ENCODE measurements at regions of chr16 and their contacts with region 1.

Region 1: DNA sequence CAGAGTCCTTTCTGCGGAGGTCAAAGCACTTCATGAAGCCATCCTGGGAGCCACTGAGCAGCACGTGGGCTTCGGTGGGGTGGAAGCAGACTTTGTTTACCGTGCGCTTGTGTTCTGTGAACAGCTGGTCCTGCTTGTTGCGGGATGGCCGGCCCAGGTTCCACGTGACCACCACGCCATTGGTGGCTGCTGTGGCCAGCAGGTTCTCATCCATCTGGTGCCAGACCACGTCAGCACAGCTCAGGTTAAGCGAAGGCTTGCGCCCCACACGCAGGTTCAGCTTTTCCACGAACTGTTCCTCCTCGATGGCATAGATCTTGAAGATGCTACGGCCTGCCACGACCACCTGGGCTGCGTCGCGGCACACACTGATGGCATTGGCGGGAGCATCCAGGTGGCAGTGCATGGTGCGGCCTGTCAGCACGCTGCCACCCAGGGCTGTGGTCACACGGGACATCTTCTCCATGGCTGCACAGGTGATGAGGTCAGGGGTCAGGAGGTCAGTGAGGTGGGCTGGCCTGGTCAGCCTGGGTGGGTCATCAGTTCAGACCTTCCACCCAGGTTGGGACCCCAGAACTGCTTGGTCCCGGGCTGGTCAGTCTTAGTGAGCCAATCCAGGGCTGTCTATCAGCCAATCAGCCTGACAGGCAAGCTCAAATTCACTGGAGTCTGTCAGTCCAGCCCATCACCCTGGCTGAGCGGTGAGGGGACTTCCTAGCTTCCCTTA is 860 bp downstream of the WDR24 start:
- DNase-seq: no peak
- ATAC-seq: no peak
- H3K4me3 Mint-ChIP-seq: peak overlapping the region; percentile 90
- H3K27ac Mint-ChIP-seq: peak overlapping the region; percentile 82
- H3K4me1 Mint-ChIP-seq: peaks cover 33% of the 10 kb centered on the region
- H3K27me3 Mint-ChIP-seq: peaks cover 9% of the 10 kb centered on the region
- CTCF ChIP-seq: no peak

Region 2: DNA sequence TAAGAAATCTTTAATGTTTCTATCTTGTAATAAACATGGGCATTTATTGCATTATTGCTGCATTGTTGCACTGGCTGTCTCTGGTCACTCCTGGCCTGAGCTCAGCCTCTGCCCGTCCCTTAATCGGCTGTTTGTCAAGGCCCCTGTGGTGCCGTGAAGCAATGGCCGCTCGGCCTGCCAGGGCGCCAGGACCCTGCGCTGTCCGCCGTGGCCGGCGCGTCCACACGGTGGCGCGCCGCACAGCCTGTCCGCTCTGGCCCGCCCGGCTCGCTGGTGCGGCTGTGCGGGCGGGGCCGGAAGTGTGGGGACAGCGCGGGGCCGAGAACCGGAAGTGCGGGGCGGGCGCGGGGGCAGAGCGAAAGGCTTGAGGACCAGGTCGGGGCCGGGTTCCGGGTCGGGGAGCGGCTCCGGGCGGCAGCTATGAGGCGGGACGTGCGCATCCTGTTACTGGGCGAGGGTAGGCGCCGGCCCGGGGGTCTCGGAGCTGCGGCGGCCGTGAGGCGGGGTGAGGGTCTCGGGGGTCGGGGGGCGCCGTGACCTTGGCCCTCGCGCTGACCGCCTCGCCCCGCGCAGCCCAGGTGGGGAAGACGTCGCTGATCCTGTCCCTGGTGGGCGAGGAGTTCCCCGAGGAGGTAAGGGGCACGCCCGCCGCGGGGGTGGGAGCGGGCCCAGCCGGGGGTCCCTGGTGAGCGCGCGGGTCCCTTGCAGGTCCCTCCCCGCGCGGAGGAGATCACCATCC is 21.4 kb before region 1 on chr16 and contains the start of gene RHOT2:
- CTCF ChIA-PET with region 1: no interaction called
- POLR2A ChIA-PET with region 1: interaction called, 14 read pairs
- intact Hi-C with region 1: no loop called
- DNase-seq: peak; percentile 96
- ATAC-seq: peak; percentile 98
- H3K4me3 Mint-ChIP-seq: peak within 1 kb of the TSS; percentile 80
- H3K27ac Mint-ChIP-seq: peak within 1 kb of the TSS; percentile 80
- H3K4me1 Mint-ChIP-seq: peaks cover 12% of the 10 kb centered on the region
- H3K27me3 Mint-ChIP-seq: no peaks in the 10 kb centered on the region
- CTCF ChIP-seq: peak; percentile 7
- total RNA-seq, gene RHOT2: 141 and 170 TPM in 2 replicates

Region 3: GRCh38 chr16:674968-675883 is 14.1 kb before region 1 on chr16 and contains the start of gene RHBDL1:
- CTCF ChIA-PET with region 1: no interaction called
- POLR2A ChIA-PET with region 1: interaction called, 31 read pairs
- intact Hi-C with region 1: no loop called
- DNase-seq: no peak
- ATAC-seq: no peak
- H3K4me3 Mint-ChIP-seq: peak within 1 kb of the TSS; percentile 35
- H3K27ac Mint-ChIP-seq: no peak within 1 kb of the TSS
- H3K4me1 Mint-ChIP-seq: peaks cover 15% of the 10 kb centered on the region
- H3K27me3 Mint-ChIP-seq: peaks cover 9% of the 10 kb centered on the region
- CTCF ChIP-seq: no peak
- total RNA-seq, gene RHBDL1: 0.24 TPM in 1 of 2 replicates, not detected in the other

Region 4: DNA sequence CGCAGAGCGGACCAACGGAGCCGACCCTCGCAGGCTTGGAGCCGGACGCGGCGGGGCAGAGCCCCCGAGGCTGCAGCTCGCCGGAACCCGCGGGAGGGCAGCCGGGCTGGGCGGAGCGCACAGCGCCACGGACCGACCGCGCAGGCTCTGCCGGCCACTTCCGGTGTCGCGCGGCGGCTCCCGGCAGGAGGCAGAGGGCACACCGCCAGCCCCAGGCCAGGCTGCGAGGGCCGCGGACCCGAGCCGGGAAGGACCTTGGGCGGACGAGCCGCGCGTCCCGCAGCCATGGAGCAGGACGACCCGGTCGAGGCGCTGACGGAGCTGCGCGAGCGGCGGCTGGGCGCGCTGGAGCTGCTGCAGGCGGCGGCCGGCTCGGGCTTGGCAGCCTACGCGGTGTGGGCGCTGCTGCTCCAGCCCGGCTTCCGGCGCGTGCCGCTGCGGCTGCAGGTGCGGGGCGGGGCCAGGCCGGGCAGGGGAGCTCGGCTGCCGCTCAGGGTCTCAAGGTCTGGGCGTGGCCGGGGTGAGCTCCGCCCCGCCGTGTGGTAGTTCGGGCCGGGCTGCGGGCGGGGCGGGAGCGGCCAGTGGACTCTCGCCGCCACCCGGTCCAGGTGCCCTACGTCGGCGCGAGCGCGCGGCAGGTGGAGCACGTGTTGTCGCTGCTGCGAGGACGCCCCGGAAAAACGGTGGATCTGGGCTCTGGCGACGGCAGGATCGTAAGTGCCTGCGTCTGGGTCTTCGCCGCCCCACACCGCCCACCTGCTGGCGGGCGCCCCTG is 31.8 kb after region 1 on chr16 and contains the start of gene ANTKMT:
- CTCF ChIA-PET with region 1: no interaction called
- POLR2A ChIA-PET with region 1: interaction called, 34 read pairs
- intact Hi-C with region 1: loop called (anchors 2 kb)
- DNase-seq: peak; percentile 89
- ATAC-seq: peak; percentile 90
- H3K4me3 Mint-ChIP-seq: peak within 1 kb of the TSS; percentile 80
- H3K27ac Mint-ChIP-seq: peak within 1 kb of the TSS; percentile 73
- H3K4me1 Mint-ChIP-seq: peaks cover 19% of the 10 kb centered on the region
- H3K27me3 Mint-ChIP-seq: peaks cover 3% of the 10 kb centered on the region
- CTCF ChIP-seq: no peak
- total RNA-seq, gene ANTKMT: 58.0 and 67.4 TPM in 2 replicates

Region 5: GRCh38 chr16:728131-728889 is 39.0 kb after region 1 on chr16:
- CTCF ChIA-PET with region 1: no interaction called
- POLR2A ChIA-PET with region 1: interaction called, 11 read pairs
- intact Hi-C with region 1: no loop called
- DNase-seq: peak; percentile 71
- ATAC-seq: peak; percentile 66
- H3K4me3 Mint-ChIP-seq: peak overlapping the region; percentile 69
- H3K27ac Mint-ChIP-seq: no peak overlapping the region
- H3K4me1 Mint-ChIP-seq: peaks cover 4% of the 10 kb centered on the region
- H3K27me3 Mint-ChIP-seq: no peaks in the 10 kb centered on the region
- CTCF ChIP-seq: no peak

Region 6: GRCh38 chr16:747978-748746 is 58.8 kb after region 1 on chr16:
- CTCF ChIA-PET with region 1: no interaction called
- POLR2A ChIA-PET with region 1: no interaction called
- intact Hi-C with region 1: no loop called
- DNase-seq: no peak
- ATAC-seq: no peak
- H3K4me3 Mint-ChIP-seq: no peak overlapping the region
- H3K27ac Mint-ChIP-seq: no peak overlapping the region
- H3K4me1 Mint-ChIP-seq: no peaks in the 10 kb centered on the region
- H3K27me3 Mint-ChIP-seq: no peaks in the 10 kb centered on the region
- CTCF ChIP-seq: no peak

Measured in activated B cell treated with CpG ODN at 0.5 μM for 24 hours (primary cell).